ENCODE measurements at regions of chr20 and their contacts with region 1.

Region 1: GRCh38 chr20:47620808-47621805 is 119.4 kb downstream of the NCOA3 start:
- DNase-seq: peak; percentile 32
- ATAC-seq: peak; percentile 79
- H3K4me3 ChIP-seq: no peak overlapping the region
- H3K27ac ChIP-seq: peak overlapping the region; percentile 33
- H3K4me1 ChIP-seq: peaks cover 10% of the 10 kb centered on the region
- H3K27me3 ChIP-seq: no peaks in the 10 kb centered on the region
- CTCF ChIP-seq: peak; percentile 59 to 68 (median 60)
- EP300 ChIP-seq: no peak
- POLR2A ChIP-seq: no peak
- RAD21 ChIP-seq: peak; percentile 89

Region 2: DNA sequence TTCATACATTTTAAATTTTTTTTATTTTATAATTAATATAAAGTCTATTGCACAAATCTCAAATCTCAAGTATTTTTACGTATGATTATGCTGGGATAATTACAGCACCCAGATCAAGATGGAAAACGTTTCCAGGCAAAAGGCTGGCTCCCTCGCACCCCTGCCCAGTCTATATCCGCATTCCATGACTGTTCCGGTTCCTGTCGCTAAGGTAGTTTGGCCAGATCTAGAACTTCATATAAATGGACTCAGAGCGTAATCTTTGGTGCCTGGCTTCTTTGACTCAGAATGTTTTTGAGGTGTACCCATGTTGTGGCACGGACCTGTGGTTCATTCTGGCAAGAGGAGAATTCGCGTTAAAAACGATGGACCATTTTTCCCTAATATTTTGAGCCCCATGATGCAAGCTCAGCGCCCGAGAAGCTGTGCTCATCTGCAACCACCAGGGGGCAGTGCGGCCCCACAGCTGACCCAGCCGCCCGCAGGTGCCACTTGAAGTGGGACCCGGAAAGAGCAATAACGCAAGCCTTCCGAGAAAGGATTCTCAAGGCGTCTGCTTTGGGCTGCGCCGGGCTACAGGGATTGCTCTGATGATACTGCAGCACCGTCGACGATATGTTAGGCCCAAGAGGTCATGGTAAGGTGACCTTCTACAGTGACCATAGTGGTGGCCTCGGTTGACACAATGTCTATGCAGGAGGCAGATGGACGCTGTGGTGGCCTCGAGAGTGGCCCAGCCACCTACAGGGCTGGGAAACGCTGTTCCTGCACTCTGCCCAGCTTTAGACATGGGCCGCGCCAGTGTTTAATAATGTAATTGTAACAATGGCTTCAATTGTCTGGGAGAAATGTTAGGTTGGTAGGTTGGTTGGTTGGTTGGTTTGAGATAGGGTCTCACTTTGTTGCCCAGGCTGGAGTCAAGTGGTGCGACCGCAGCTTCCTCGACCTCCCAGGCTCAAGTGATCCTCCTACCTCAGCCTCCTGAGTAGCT is 424.7 kb before region 1 on chr20:
- CTCF ChIA-PET with region 1: interaction called, 9 read pairs
- POLR2A ChIA-PET with region 1: no interaction called
- RAD21 ChIA-PET with region 1: interaction called, 9 read pairs
- SMC1A ChIA-PET with region 1: interaction called, 8 read pairs
- in situ Hi-C with region 1: no loop called
- intact Hi-C with region 1: loop called (anchors 1 kb)
- DNase-seq: peak; percentile 19
- ATAC-seq: peak; percentile 86
- H3K4me3 ChIP-seq: no peak overlapping the region
- H3K27ac ChIP-seq: no peak overlapping the region
- H3K4me1 ChIP-seq: peaks cover 17% of the 10 kb centered on the region
- H3K27me3 ChIP-seq: peaks cover 0 to 1% of the 10 kb centered on the region in 2 experiments; a peak in 1 of 4 replicates
- CTCF ChIP-seq: peak; percentile 91 to 97 (median 95)
- EP300 ChIP-seq: no peak
- POLR2A ChIP-seq: no peak
- RAD21 ChIP-seq: peak; percentile 95

Region 3: DNA sequence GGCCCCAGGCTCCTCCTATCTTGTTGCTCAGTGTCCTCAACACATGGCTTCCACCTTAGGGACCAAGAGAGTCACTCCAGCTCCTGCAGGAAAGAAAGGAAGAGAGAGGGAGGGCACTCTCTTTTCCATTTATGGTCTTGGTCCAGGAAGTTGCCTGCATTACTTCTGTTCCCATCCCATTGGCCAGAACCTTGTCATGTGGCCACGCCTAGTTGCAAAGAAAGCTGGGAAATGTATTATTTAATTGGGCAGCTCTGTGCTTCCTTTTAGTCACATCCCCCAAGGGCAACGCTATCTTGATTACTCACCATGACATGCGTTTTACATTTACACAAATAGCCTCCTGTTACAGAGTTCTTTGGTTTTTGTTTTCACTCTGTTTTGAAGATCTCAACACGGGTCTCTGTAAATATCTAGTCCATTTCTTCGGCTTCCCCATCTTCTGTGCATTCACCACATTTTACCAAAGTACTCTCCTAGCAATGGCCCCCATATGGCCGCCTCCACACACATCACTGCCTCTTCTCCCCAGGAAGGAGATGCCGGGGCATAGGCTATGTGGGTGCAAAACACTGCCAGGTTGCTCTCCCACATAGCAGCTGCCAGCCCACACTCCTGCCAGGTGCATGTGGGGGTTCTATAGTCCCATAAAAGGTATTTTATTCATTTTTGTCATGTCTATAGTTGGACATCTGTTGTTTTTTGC is 228.9 kb before region 1 on chr20:
- CTCF ChIA-PET with region 1: interaction called, 4 read pairs
- POLR2A ChIA-PET with region 1: interaction called, 6 read pairs
- RAD21 ChIA-PET with region 1: interaction called, 5 read pairs
- SMC1A ChIA-PET with region 1: interaction called, 13 read pairs
- in situ Hi-C with region 1: loop called (anchors 5 kb)
- intact Hi-C with region 1: no loop called
- DNase-seq: no peak
- ATAC-seq: peak; percentile 90
- H3K4me3 ChIP-seq: no peak overlapping the region
- H3K27ac ChIP-seq: peak overlapping the region; percentile 11
- H3K4me1 ChIP-seq: peaks cover 20% of the 10 kb centered on the region
- H3K27me3 ChIP-seq: no peaks in the 10 kb centered on the region
- CTCF ChIP-seq: no peak
- EP300 ChIP-seq: no peak
- POLR2A ChIP-seq: 0 out of 2 replicates have a peak, but pooled peaks have one; percentile 26
- RAD21 ChIP-seq: no peak

Region 4: DNA sequence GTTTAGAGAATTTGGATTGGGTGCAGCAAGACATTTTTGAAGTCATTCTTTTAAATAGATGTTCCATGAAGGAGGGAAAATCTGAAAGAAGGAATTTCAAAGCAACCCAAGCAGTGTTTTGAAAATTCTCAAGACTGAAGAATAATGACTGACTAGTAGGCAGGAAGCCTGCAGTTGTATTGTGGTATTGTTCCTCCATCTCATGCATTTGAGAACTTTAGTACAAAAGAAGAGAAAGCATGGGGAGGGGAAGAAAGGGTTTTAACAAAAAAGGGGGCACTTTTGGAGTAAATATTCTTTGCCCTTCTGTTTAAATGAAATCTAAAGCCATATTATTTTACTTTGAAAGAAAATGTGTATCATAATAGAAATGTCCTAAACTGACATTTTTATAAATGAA is 112.8 kb before region 1 on chr20:
- CTCF ChIA-PET with region 1: interaction called, 28 read pairs
- POLR2A ChIA-PET with region 1: interaction called, 8 read pairs
- RAD21 ChIA-PET with region 1: interaction called, 16 read pairs
- SMC1A ChIA-PET with region 1: interaction called, 42 read pairs
- in situ Hi-C with region 1: no loop called
- intact Hi-C with region 1: loop called (anchors 2 kb)
- DNase-seq: no peak
- ATAC-seq: peak; percentile 35; the same call in 2 of the 3 replicates
- H3K4me3 ChIP-seq: peak overlapping the region; percentile 75
- H3K27ac ChIP-seq: peak overlapping the region; percentile 68
- H3K4me1 ChIP-seq: peaks cover 26% of the 10 kb centered on the region
- H3K27me3 ChIP-seq: no peaks in the 10 kb centered on the region
- CTCF ChIP-seq: no peak
- EP300 ChIP-seq: no peak
- POLR2A ChIP-seq: no peak
- RAD21 ChIP-seq: no peak

Region 5: DNA sequence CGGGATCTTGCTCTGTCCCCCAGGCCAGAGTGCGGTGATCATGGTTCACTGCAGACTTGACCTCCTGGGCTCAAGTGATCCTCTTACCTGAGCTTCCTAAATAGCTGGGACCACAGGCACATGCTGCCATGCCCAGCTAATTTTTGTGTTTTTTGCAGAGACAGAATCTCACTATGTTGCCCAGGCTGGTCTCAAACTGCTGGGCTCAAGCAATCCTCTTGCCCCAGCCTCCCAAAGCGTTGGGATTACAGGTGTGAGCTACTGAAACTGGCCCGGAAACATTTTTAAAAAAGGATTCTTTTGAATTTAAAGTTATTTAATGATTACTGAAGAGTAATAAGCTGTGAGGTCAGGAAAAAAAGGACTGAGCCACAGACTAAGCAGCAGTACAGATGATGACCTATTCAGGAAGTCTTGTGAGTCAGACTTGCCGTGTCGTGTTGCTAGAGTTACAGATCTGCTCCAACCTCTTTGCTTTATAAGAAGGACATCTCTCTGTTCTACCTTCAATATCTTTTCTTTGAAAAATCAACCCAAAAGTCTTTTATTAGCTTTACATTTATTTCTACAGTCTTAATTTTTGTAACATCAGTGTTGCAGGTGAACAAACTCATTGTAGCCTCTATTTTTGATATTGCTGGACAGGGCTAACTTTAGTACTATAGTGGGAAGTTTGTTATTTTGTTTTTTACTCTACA is 10.7 kb before region 1 on chr20:
- CTCF ChIA-PET with region 1: interaction called, 16 read pairs
- POLR2A ChIA-PET with region 1: interaction called, 3 read pairs
- RAD21 ChIA-PET with region 1: interaction called, 5 read pairs
- SMC1A ChIA-PET with region 1: interaction called, 27 read pairs
- in situ Hi-C with region 1: no loop called
- intact Hi-C with region 1: no loop called
- DNase-seq: peak; percentile 33
- ATAC-seq: peak; percentile 94
- H3K4me3 ChIP-seq: no peak overlapping the region
- H3K27ac ChIP-seq: peak overlapping the region; percentile 18; the same call in 1 of the 2 replicates
- H3K4me1 ChIP-seq: peaks cover 6% of the 10 kb centered on the region
- H3K27me3 ChIP-seq: no peaks in the 10 kb centered on the region
- CTCF ChIP-seq: no peak
- EP300 ChIP-seq: no peak
- POLR2A ChIP-seq: no peak
- RAD21 ChIP-seq: no peak

Measured in GM12878 (cell line).